H1 (cell line): ENCODE measurements at regions of chr9 and their contacts with region 1.

Region 1: DNA sequence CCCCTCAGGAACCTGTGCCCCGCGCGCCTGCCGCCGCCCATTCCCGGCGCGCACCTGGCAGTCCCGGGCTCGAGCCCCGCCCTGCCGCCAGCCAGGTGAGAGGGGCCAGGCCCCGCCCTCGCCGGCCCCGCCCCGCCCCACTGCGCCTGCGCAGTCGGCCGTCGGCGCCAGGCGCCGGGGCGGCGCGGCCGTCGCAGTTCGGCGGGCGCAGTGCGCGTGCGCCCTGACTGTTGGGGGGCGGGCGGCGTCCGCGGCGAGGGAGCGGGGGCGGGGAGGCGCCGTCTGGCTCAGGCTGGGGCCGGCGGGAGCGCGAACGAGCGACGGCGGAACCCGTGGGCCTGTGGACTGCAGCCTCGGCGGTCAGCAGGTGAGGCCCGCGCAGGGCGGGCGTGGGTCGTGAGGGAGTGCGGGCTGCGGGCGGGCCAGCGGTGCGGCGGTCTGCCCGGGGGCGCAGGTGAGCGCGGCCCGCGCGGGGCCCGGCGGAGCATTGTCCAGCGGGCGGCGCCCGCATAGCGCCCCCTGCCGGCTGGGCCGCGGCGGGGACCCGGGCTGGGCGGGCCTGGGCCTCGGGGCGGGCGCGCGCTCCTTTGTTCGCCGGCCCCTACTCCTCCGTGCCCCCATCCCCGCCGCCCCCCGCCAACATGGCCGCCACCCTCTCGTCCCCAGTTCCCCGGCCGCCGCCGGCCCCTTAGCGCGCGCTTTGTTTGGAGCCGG is at the start of gene SPIN1:
- DNase-seq: peak in 1 of 2 experiments; percentile 92
- H3K4me3 ChIP-seq: peak within 1 kb of the TSS; percentile 87 to 95 (median 92)
- H3K27ac ChIP-seq: peak within 1 kb of the TSS; percentile 95
- H3K4me1 ChIP-seq: peaks cover 2 to 12% (median 10%) of the 10 kb centered on the region in 4 experiments; a peak in 5 of 7 replicates
- H3K27me3 ChIP-seq: no peaks in the 10 kb centered on the region
- CTCF ChIP-seq: peak; percentile 44 to 74 (median 51)
- EP300 ChIP-seq: no peak
- POLR2A ChIP-seq: peak; percentile 54 to 77
- RAD21 ChIP-seq: peak in 1 of 2 experiments; percentile 55; a peak in 2 of 4 replicates
- total RNA-seq, gene SPIN1: 139 and 143 TPM in 2 replicates

Region 2: DNA sequence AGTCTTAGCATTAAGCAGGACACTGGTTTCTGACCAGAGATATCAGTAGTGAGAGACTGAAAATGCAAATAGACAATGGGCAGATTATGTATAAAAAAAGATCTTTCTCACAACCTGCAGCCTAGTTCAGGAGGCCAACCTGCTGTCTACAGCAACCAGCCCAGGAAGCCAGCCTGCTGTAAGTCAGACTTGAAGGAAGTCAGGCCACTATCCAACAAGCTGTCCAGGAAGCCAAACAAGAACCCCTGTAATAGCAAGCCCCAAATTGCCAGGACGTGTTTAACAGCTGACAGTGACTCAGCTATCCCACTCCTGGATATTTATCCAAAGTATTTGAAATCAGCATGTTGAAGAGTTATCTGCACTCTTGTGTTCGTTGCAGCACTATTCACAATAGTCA is 121.9 kb before region 1 on chr9:
- CTCF ChIA-PET with region 1: no interaction called
- POLR2A ChIA-PET with region 1: no interaction called
- DNase-seq: no peak
- H3K4me3 ChIP-seq: no peak overlapping the region
- H3K27ac ChIP-seq: no peak overlapping the region
- H3K4me1 ChIP-seq: no peaks in the 10 kb centered on the region
- H3K27me3 ChIP-seq: no peaks in the 10 kb centered on the region
- CTCF ChIP-seq: no peak
- EP300 ChIP-seq: no peak
- POLR2A ChIP-seq: no peak
- RAD21 ChIP-seq: no peak

Region 3: DNA sequence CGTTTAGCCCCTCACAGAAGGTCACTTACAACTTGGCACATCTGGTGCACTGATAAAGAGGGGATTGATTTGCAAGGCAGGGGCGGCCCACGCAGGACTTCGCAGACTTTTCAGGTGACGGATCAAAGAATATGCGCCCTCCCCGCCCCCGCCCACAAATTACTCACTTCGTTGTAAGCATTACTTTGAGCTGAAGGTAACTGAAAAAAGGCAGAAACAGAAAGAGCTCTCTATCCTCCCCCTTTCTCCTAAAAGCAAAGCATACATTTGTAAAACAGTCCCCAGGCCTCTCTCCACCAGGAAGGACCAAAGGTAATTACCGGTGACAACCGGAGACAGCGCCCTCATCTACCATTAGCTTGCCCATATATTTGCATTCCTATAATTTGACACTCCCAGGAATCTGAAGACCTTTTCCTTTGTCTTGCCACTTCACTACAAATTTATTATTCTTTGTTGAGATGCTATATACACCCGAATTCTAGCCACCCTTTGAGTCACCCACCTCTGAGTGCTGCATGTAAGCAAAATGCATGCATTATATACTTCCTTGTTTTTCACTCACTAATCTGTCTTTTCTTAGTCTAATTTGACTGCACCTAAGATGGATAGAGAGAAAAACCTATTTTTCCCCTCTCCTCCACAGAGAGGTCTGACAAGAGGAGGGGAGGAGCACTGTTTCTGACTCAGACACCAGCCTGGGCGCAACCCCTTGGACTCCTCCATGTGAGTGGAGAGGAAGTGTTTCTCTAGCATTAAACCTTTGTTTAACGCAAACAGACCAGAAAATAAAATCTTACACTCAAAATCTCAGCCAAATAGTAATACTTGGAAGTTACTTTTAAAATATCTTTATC is 74.7 kb before region 1 on chr9:
- CTCF ChIA-PET with region 1: interaction called, 12 read pairs
- POLR2A ChIA-PET with region 1: interaction called, 4 read pairs
- DNase-seq: peak; percentile 38 to 55
- H3K4me3 ChIP-seq: peak overlapping the region in 2 of 4 experiments; percentile 3 to 47; a peak in 5 of 8 replicates
- H3K27ac ChIP-seq: peak overlapping the region; percentile 68
- H3K4me1 ChIP-seq: peaks cover 2 to 23% (median 8%) of the 10 kb centered on the region in 4 experiments
- H3K27me3 ChIP-seq: no peaks in the 10 kb centered on the region
- CTCF ChIP-seq: peak; percentile 27 to 56 (median 45)
- EP300 ChIP-seq: no peak
- POLR2A ChIP-seq: no peak
- RAD21 ChIP-seq: peak; percentile 50 to 51

Region 4: GRCh38 chr9:88378317-88378716 is 10.0 kb before region 1 on chr9:
- CTCF ChIA-PET with region 1: interaction called, 3 read pairs
- POLR2A ChIA-PET with region 1: interaction called, 10 read pairs
- DNase-seq: no peak
- H3K4me3 ChIP-seq: peak overlapping the region in 1 of 4 experiments; percentile 2; a peak in 1 of 8 replicates
- H3K27ac ChIP-seq: no peak overlapping the region
- H3K4me1 ChIP-seq: peaks cover 1 to 9% (median 5%) of the 10 kb centered on the region in 4 experiments; a peak in 4 of 7 replicates
- H3K27me3 ChIP-seq: no peaks in the 10 kb centered on the region
- CTCF ChIP-seq: peak; percentile 4 to 62 (median 31); a peak in 3 of 4 replicates
- EP300 ChIP-seq: no peak
- POLR2A ChIP-seq: no peak
- RAD21 ChIP-seq: peak; percentile 45 to 48